T-cell (primary cell): ENCODE measurements at regions of chr3 and their contacts with region 1.

Region 1: DNA sequence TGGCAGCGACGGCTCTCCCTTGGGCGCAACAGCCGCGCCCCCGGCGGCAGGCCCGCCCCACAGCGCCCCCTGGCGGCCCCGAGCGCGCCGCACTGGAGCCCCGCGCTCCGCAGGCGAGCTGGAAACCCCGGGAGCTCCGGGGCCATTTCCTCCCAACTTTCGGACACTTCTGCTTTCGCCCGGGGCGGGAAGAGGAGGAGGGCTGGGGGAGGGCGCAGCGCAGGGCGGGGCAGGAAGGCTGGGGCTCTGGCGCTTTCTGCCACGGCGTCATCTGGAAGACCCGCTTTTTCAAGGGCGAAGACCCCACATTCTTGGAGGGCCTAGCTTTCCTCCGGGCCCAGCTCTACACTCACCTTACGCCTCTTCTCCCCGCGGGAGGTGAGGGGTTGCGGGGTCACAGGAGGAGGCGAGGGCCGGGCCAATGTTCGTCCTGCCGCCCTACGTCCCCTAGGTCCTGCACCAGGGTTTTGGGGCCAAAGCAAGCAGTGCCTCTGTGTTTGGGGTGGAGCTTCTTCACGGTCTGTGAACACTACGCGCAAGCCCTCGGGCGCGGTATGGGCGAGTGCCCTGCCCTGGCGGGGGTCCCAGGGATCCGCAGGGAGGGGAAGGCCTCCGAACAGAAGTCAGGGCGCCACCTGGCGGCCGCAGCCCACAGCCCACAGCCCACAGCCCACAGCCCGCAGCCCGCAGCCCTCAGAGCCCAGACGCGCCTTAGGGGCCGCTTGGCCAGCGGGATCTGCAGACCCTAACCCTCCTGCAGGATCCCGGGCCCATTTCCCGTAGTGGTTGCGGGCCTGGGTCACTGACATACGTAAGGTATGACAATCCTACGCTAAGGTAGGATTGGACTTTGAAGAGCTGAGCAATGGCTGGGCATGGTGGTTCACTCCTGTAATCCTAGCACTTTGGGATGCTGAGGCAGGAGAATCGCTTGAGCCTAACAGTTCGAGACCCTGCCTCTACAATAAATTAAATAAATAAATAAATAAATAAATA is 31.1 kb downstream of the FOXL2 start:
- DNase-seq: peak; percentile 35 to 87 (median 73)
- ATAC-seq: peak; percentile 87 to 89 (median 88)
- H3K4me3 ChIP-seq: peak overlapping the region; percentile 75 to 86
- H3K4me3 Mint-ChIP-seq: peak overlapping the region; percentile 79 to 82 (median 79)
- H3K27ac ChIP-seq: no peak overlapping the region
- H3K27ac Mint-ChIP-seq: peak overlapping the region in 1 of 2 donors; percentile 34
- H3K4me1 ChIP-seq: peaks cover 0 to 15% of the 10 kb centered on the region in 2 experiments
- H3K4me1 Mint-ChIP-seq: peaks cover 5% of the 10 kb centered on the region in 3 donors
- H3K27me3 ChIP-seq: peaks cover 0 to 15% of the 10 kb centered on the region in 2 experiments
- H3K27me3 Mint-ChIP-seq: peaks cover 4 to 8% of the 10 kb centered on the region in 2 donors

Region 2: DNA sequence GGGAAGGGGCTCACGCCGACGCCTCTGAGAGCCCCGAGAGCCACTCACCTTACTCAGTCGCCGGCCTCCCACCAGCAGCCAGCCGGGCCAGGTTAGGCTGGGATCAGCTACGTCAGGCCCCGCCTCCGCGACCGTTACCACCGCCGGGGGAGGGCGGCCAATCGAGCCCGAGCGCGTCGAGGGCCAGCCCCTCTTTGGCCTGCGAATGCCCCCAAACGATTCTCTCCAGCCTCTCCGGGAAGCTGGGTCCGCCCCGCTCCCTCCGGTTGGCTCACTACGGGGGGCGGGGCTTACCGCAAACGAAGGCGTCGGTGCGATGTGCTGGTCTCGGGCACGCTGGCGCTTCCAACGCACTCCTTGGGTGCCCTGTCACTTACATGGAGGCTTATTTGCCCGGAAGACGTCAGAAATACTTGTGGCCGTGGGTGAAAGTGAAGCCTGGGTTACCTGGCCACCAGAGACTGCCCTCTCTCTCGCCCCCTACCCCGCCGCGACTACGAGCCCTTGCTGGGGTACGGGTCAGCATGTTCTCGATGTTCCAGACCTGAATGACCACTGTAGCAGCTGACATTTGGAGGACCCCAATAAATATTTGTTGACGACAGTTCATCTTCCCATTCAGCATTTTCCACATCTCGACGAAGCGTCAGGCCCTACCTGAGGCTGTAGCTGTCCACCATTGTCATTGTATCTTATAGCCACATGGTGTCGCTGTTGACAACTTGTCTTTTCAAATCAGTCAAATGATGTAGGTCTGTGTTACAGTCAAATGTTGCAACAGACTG is 321.5 kb before region 1 on chr3 and contains the start of gene CEP70:
- CTCF ChIA-PET with region 1: interaction called, 38 to 127 read pairs
- POLR2A ChIA-PET with region 1: interaction called in 1 of 2 experiments, 3 read pairs
- DNase-seq: peak; percentile 75 to 94 (median 89)
- ATAC-seq: peak; percentile 92 to 96 (median 94)
- H3K4me3 ChIP-seq: peak within 1 kb of the TSS; percentile 85 to 86
- H3K4me3 Mint-ChIP-seq: peak within 1 kb of the TSS; percentile 86 to 96 (median 89)
- H3K27ac ChIP-seq: peak within 1 kb of the TSS; percentile 94
- H3K27ac Mint-ChIP-seq: peak within 1 kb of the TSS; percentile 95 to 97
- H3K4me1 ChIP-seq: peaks cover 5 to 16% of the 10 kb centered on the region in 2 experiments
- H3K4me1 Mint-ChIP-seq: peaks cover 13 to 20% (median 13%) of the 10 kb centered on the region in 3 donors
- H3K27me3 ChIP-seq: no peaks in the 10 kb centered on the region
- H3K27me3 Mint-ChIP-seq: no peaks in the 10 kb centered on the region
- total RNA-seq, gene CEP70: 14.5 to 23.4 (median 21.7) TPM

Region 3: GRCh38 chr3:138608322-138609135 is 307.3 kb before region 1 on chr3 and contains the start of gene FAIM:
- CTCF ChIA-PET with region 1: interaction called, 4 to 13 read pairs
- POLR2A ChIA-PET with region 1: no interaction called
- DNase-seq: peak in 34 of 35 experiments; percentile 40 to 75 (median 58)
- ATAC-seq: peak; percentile 75 to 80 (median 78)
- H3K4me3 ChIP-seq: peak within 1 kb of the TSS; percentile 61 to 67
- H3K4me3 Mint-ChIP-seq: peak within 1 kb of the TSS; percentile 79 to 85 (median 82)
- H3K27ac ChIP-seq: peak within 1 kb of the TSS; percentile 80
- H3K27ac Mint-ChIP-seq: peak within 1 kb of the TSS; percentile 93 to 98
- H3K4me1 ChIP-seq: peaks cover 0 to 20% of the 10 kb centered on the region in 2 experiments
- H3K4me1 Mint-ChIP-seq: peaks cover 12 to 20% (median 16%) of the 10 kb centered on the region in 3 donors
- H3K27me3 ChIP-seq: no peaks in the 10 kb centered on the region
- H3K27me3 Mint-ChIP-seq: peaks cover 0 to 3% of the 10 kb centered on the region in 2 donors
- total RNA-seq, gene FAIM: 2.9 to 4.8 (median 3.0) TPM

Region 4: GRCh38 chr3:138688871-138689299 is 226.9 kb before region 1 on chr3:
- CTCF ChIA-PET with region 1: interaction called, 27 to 38 read pairs
- POLR2A ChIA-PET with region 1: no interaction called
- DNase-seq: peak in 1 of 35 experiments; percentile 9
- ATAC-seq: no peak
- H3K4me3 ChIP-seq: no peak overlapping the region
- H3K4me3 Mint-ChIP-seq: no peak overlapping the region
- H3K27ac ChIP-seq: no peak overlapping the region
- H3K27ac Mint-ChIP-seq: no peak overlapping the region
- H3K4me1 ChIP-seq: no peaks in the 10 kb centered on the region
- H3K4me1 Mint-ChIP-seq: peaks cover 0 to 9% (median 0%) of the 10 kb centered on the region in 3 donors
- H3K27me3 ChIP-seq: no peaks in the 10 kb centered on the region
- H3K27me3 Mint-ChIP-seq: no peaks in the 10 kb centered on the region

Region 5: GRCh38 chr3:138694287-138695007 is 221.4 kb before region 1 on chr3:
- CTCF ChIA-PET with region 1: interaction called, 65 to 109 read pairs
- POLR2A ChIA-PET with region 1: no interaction called
- DNase-seq: no peak
- ATAC-seq: no peak
- H3K4me3 ChIP-seq: no peak overlapping the region
- H3K4me3 Mint-ChIP-seq: no peak overlapping the region
- H3K27ac ChIP-seq: no peak overlapping the region
- H3K27ac Mint-ChIP-seq: no peak overlapping the region
- H3K4me1 ChIP-seq: no peaks in the 10 kb centered on the region
- H3K4me1 Mint-ChIP-seq: no peaks in the 10 kb centered on the region
- H3K27me3 ChIP-seq: no peaks in the 10 kb centered on the region
- H3K27me3 Mint-ChIP-seq: no peaks in the 10 kb centered on the region

Region 6: DNA sequence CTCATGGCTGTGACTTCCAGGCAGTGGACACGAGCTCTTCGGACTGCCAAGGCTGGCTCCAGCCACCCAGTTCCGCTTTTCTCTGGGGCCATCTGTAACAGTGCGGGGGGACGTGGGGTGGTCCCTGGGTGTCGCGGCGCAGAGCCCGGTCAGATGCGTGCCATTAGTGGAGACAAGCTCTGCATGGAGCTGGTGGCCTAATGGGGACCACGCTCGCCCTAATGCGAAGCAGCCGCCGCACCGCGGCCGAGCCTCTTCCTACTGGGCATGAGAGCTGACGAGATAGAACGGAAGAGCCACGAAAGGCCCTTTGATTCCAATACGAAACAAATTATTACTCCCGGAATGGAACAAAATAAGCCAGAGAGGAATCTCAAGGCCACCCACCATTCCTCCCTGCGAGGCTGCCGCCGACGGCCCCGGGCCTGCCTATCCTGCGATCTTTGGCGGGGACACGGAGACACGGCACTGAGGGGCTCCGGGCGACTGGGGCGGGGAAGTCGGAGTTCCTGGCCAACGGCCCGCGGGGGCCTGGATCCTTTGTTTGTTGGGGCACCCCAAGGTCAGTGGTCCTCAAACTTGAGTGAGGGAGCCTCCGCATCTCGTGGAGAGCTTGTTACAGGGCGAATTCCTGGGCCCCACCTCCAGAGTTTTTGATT is 13.1 kb after region 1 on chr3:
- CTCF ChIA-PET with region 1: interaction called, 14 to 32 read pairs
- POLR2A ChIA-PET with region 1: no interaction called
- DNase-seq: no peak
- ATAC-seq: no peak
- H3K4me3 ChIP-seq: no peak overlapping the region
- H3K4me3 Mint-ChIP-seq: no peak overlapping the region
- H3K27ac ChIP-seq: no peak overlapping the region
- H3K27ac Mint-ChIP-seq: no peak overlapping the region
- H3K4me1 ChIP-seq: no peaks in the 10 kb centered on the region
- H3K4me1 Mint-ChIP-seq: no peaks in the 10 kb centered on the region
- H3K27me3 ChIP-seq: peaks cover 0 to 30% of the 10 kb centered on the region in 2 experiments
- H3K27me3 Mint-ChIP-seq: peaks cover 21 to 35% of the 10 kb centered on the region in 2 donors

Region 7: DNA sequence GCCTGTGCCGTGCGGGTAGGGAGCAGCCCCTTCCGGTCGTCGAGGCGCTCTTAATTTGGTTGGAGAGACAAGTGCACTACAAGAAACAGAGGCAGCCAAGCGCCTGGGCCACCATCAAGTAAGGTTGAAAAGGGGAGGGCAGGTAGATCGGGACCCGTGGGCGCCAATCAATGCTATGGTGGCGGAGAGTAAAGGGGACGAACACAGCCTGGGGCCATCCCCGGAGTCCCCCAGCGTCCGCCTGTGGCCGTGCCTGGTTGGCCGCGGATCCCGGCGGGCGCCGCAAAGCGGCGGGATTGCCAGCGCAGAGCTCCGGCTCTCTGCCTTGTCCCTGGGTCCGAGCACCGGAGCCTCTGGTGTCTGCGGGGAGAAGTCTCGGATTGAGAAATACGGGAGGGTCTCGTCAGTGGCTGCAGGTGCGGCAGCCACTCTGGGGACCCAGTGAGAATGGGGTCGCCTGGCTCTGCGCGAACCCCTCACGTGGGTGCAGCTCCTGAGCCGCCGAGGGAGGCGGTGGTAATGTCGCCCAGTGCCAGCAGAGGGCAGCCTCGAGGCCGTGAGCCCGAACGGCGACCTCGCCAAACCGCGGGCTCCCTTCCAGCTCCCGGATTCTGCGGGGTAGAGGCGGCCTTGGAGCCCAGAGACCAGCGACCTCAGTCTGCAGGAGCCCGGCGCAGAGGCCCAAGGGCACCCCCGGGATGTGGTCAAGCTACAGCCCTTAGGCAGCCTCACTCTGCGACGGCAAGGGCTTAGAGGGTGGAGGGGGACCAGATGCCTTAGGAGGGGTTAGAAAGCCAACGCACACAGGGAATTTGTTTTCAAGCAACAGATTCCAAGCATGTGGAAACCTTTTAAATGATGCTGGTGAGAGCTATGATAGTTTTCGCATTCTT is 20.3 kb after region 1 on chr3:
- CTCF ChIA-PET with region 1: interaction called, 9 to 14 read pairs
- POLR2A ChIA-PET with region 1: no interaction called
- DNase-seq: peak; percentile 24 to 81 (median 56)
- ATAC-seq: peak; percentile 78 to 86 (median 79)
- H3K4me3 ChIP-seq: peak overlapping the region; percentile 36 to 65
- H3K4me3 Mint-ChIP-seq: peak overlapping the region; percentile 62 to 83 (median 64)
- H3K27ac ChIP-seq: no peak overlapping the region
- H3K27ac Mint-ChIP-seq: no peak overlapping the region
- H3K4me1 ChIP-seq: peaks cover 3 to 46% of the 10 kb centered on the region in 2 experiments
- H3K4me1 Mint-ChIP-seq: peaks cover 33 to 41% (median 41%) of the 10 kb centered on the region in 3 donors
- H3K27me3 ChIP-seq: peaks cover 8 to 76% of the 10 kb centered on the region in 2 experiments
- H3K27me3 Mint-ChIP-seq: peaks cover 60 to 87% of the 10 kb centered on the region in 2 donors

Region 8: DNA sequence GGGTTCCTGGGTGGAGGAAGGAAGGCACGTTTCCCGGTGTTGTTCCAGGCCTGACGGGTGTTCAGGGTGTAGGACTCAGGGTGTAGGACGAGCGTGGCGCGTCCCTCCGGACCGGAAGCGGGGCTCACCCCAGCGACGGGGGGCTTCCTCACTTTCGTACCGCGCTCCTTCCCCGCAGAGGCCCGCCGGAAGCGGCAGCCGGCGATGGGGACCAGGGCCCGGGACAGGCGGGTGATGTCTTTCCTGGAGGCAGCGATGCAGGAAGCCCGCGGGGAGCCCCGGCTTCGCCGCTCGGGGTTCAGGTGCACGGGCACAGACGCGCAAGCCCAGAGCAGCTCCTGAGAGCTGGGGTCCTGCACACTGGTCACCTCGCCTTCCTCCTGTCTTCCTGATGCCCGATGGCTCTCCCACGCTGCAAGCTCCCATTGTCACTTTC is 44.6 kb after region 1 on chr3:
- CTCF ChIA-PET with region 1: no interaction called
- POLR2A ChIA-PET with region 1: no interaction called
- DNase-seq: no peak
- ATAC-seq: peak in 1 of 4 experiments; percentile 37
- H3K4me3 ChIP-seq: peak overlapping the region in 1 of 2 donors; percentile 4
- H3K4me3 Mint-ChIP-seq: peak overlapping the region; percentile 7 to 63 (median 13)
- H3K27ac ChIP-seq: no peak overlapping the region
- H3K27ac Mint-ChIP-seq: no peak overlapping the region
- H3K4me1 ChIP-seq: peaks cover 0 to 13% of the 10 kb centered on the region in 2 experiments
- H3K4me1 Mint-ChIP-seq: peaks cover 18 to 27% (median 19%) of the 10 kb centered on the region in 3 donors
- H3K27me3 ChIP-seq: peaks cover 5 to 47% of the 10 kb centered on the region in 2 experiments
- H3K27me3 Mint-ChIP-seq: peaks cover 64 to 66% of the 10 kb centered on the region in 2 donors

Region 9: DNA sequence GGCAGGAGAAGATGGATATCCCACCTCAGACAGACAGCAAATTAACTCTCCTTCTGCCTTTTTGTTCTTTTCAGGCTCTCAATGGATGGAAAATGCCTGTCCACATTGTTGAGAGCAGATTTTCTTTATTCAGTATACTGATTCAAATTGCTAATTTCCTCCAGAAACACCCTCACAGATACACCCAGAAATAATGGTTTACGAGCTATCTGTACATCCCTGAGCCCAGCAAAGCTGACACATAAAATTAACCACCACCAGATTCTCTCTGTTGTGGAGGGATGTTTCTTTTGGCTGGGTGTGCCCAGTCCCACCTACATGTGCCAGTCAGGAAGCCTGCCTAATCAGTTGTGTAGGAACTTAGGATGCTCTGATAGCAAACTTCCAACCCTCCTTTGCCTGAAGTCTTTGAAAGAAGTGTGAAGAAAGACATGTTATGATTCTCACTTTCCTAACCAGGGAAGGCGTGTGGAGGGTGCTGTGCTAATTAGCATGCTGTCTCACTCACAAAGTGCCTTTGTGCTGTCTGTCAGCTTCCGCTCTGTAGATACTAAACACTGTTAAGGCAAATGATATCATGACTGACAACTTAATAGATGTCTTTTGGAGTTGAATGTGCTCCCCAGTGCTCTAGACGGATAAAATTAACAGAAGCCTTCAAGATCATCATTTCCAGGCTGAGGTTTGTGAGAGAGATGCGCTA is 1227.7 kb after region 1 on chr3:
- CTCF ChIA-PET with region 1: no interaction called
- POLR2A ChIA-PET with region 1: no interaction called
- DNase-seq: no peak
- ATAC-seq: no peak
- H3K4me3 ChIP-seq: no peak overlapping the region
- H3K4me3 Mint-ChIP-seq: no peak overlapping the region
- H3K27ac ChIP-seq: no peak overlapping the region
- H3K27ac Mint-ChIP-seq: no peak overlapping the region
- H3K4me1 ChIP-seq: no peaks in the 10 kb centered on the region
- H3K4me1 Mint-ChIP-seq: no peaks in the 10 kb centered on the region
- H3K27me3 ChIP-seq: no peaks in the 10 kb centered on the region
- H3K27me3 Mint-ChIP-seq: no peaks in the 10 kb centered on the region